PC-9 (cell line): ENCODE measurements at regions of chr7 and their contacts with region 1.

Region 1: DNA sequence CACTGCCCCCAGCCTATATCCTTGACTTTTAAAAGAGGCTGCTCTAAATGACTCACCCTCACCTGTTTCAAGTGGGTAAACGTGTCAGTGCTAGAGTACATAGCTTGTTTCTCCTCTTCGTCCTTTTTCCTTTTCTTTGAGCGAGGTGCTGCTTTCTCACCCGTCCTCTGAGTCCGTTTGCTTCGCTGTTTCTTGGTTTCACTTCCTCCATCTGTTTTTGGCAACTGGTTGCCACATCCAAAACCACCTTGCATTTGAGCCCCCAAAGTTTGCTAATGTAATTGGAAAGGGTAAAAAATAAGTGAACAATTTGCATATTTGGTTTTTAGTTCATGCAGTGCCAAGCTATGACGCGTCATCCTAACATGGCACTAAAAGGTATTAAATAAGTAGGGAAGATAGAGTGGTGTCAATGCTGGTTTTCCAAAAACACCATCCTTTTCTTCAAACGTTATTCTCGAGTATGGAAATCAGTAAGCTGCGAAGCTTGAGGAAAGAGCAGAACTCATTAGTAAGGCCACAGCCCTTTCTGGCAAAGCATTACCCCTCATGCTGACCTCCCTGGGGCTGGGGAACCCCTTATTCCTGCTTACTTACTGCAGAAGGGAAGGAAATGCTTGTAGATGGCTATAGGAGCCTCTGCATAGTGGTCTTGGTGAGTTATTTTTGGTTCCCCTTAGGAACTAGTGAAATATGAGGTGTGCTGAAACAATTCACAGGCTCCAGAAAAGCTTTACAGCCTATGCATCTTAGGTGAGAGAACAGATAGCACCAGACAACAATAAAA is 133.5 kb downstream of the GALNT11 start:
- DNase-seq: no peak
- H3K4me3 ChIP-seq: no peak overlapping the region
- H3K27ac ChIP-seq: no peak overlapping the region
- H3K4me1 ChIP-seq: no peaks in the 10 kb centered on the region
- H3K27me3 ChIP-seq: no peaks in the 10 kb centered on the region
- CTCF ChIP-seq: no peak

Region 2: GRCh38 chr7:151361193-151361959 is 797.6 kb before region 1 on chr7:
- CTCF ChIA-PET with region 1: no interaction called
- POLR2A ChIA-PET with region 1: no interaction called
- intact Hi-C with region 1: no loop called
- DNase-seq: no peak
- H3K4me3 ChIP-seq: no peak overlapping the region
- H3K27ac ChIP-seq: no peak overlapping the region
- H3K4me1 ChIP-seq: no peaks in the 10 kb centered on the region
- H3K27me3 ChIP-seq: no peaks in the 10 kb centered on the region
- CTCF ChIP-seq: no peak

Region 3: DNA sequence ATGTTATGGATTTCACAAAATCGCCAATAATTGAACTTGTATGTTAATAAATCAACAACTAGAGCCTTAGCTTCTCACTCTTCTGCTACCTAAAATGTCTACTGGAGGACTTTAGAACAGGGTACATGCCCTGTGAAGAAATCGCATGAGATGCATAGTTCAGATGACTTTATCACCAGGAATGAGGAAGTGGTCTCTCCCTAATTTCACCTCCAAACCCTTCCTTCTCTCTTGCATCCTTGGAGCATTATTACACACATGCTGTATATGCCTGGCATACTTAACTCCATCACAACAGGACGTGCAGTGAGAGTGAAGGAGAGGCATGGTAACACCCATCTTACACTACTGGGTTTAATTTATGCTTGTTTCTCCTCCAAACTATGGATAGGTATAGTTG is 667.1 kb before region 1 on chr7:
- CTCF ChIA-PET with region 1: no interaction called
- POLR2A ChIA-PET with region 1: interaction called, 11 read pairs
- intact Hi-C with region 1: no loop called
- DNase-seq: peak; percentile 58 to 99
- H3K4me3 ChIP-seq: no peak overlapping the region; the same call in 1 of the 2 replicates
- H3K27ac ChIP-seq: peak overlapping the region; percentile 86
- H3K4me1 ChIP-seq: peaks cover 65% of the 10 kb centered on the region
- H3K27me3 ChIP-seq: no peaks in the 10 kb centered on the region
- CTCF ChIP-seq: no peak

Region 4: GRCh38 chr7:152451356-152452150 is 292.6 kb after region 1 on chr7:
- CTCF ChIA-PET with region 1: no interaction called
- POLR2A ChIA-PET with region 1: no interaction called
- intact Hi-C with region 1: no loop called
- DNase-seq: no peak
- H3K4me3 ChIP-seq: no peak overlapping the region
- H3K27ac ChIP-seq: no peak overlapping the region
- H3K4me1 ChIP-seq: no peaks in the 10 kb centered on the region
- H3K27me3 ChIP-seq: no peaks in the 10 kb centered on the region
- CTCF ChIP-seq: no peak